Head of caudate nucleus (tissue), 42 donors: ENCODE measurements at regions of chr10 and their contacts with region 1.

Region 1: GRCh38 chr10:98045785-98046389 is 15.5 kb upstream of the CRTAC1 start:
- DNase-seq: peak; percentile 32 to 86 (median 68)

Region 2: DNA sequence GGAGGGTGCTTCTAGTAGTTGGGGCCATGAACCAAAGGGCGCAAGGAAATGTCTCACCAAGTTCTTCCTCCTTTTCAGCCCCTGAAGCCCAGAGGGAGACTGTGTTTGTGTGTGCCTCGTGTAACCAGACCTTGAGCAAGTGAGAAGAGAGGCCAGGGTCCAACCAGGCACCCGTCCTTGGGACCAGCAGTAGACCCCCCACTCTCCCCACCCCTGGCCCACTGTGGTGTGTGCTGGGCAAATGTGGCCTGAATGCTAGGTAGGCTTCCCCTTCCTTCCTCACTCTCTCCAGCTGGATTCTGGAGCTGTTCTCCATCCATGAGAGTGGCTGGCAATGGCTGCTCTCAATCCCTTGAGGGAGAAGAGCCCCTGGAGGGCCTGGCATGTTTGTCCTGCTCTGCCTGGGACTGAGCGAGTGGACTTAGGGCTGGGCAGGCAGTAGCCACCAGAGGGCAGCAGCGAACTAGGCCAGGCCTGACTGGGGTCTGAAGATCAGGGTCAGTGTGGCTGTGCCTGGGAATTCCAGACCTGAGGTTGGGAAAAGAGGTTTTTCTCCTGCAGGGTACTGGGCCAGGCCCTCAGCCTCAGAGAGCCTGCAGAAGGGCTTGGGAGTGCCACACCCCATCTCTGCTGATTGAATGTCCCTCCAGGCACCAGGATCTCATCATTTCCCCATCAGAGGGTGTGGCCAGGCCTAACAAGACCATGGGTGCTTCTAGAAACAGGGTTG is 286.6 kb before region 1 on chr10:
- intact Hi-C with region 1: loop called (anchors 10 kb)
- DNase-seq: peak; percentile 21 to 88 (median 70)

Region 3: GRCh38 chr10:97914837-97915211 is 131.1 kb before region 1 on chr10:
- intact Hi-C with region 1: loop called (anchors 5 kb)
- DNase-seq: peak; percentile 70 to 96 (median 86)